ENCODE measurements at regions of chr4 and their contacts with region 1.

Region 1: DNA sequence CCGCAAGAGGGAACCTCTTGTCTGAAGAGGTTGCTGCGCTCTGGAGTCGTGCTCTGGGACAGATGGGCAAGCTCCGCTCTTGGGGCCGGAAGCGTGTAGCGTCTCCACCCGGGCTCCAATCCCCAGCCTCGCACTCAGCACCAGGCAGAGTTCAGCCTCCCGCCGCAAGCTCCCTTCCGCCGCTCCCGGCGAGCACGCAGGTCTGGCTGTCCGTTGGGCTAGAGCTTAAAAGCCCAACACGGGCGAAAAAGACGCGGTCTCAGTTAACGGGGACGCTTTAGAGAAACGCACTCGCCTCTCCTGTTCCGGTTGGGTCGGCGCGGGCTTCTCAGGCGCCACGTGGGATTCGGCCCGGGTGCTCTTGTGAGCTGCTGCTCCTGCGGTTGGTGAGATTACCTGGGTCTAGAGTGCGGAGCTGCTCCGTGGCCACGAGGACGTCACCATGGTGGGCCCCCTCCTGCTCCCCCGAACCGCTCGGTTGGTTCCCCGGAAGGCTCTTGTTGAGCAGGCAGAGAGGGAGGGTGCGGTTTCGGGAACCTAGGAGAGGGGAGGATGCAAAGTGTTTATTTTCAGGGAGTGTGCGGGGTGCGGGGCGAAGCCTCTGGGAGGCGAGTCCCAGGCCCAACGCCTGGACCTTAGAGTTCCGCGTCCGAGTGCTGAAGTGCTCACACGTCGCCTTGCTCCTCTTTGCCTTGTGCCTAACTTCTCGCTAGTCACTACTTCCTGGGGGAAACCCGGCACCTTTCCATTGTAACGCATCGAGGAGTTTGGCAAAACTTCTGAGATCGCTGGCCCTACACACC is at the start of gene TMA16:
- DNase-seq: peak; percentile 81 to 92 (median 89)
- ATAC-seq: peak; percentile 96 to 98 (median 98)
- H3K4me3 ChIP-seq: peak within 1 kb of the TSS; percentile 69 to 98 (median 84)
- H3K27ac ChIP-seq: peak within 1 kb of the TSS; percentile 51 to 92 (median 82)
- H3K4me1 ChIP-seq: peaks cover 0 to 22% (median 10%) of the 10 kb centered on the region in 12 donors
- H3K27me3 ChIP-seq: no peaks in the 10 kb centered on the region
- CTCF ChIP-seq: peak in 2 of 12 donors; percentile 9 to 11
- POLR2A ChIP-seq: peak in 1 of 2 donors; percentile 33
- total RNA-seq, gene TMA16: 8.3 to 16.9 (median 11.5) TPM

Region 2: GRCh38 chr4:163166041-163166579 is 328.5 kb before region 1 on chr4:
- intact Hi-C with region 1: loop called in 3 of 10 experiments (anchors 5 to 10 kb)
- DNase-seq: peak; percentile 28 to 73 (median 45)
- ATAC-seq: peak in 3 of 4 donors; percentile 67 to 80 (median 75)
- H3K4me3 ChIP-seq: peak overlapping the region; percentile 71 to 94 (median 89)
- H3K27ac ChIP-seq: peak overlapping the region; percentile 59 to 94 (median 86)
- H3K4me1 ChIP-seq: peaks cover 0 to 33% (median 19%) of the 10 kb centered on the region in 12 donors
- H3K27me3 ChIP-seq: no peaks in the 10 kb centered on the region
- CTCF ChIP-seq: no peak
- POLR2A ChIP-seq: no peak

Region 3: DNA sequence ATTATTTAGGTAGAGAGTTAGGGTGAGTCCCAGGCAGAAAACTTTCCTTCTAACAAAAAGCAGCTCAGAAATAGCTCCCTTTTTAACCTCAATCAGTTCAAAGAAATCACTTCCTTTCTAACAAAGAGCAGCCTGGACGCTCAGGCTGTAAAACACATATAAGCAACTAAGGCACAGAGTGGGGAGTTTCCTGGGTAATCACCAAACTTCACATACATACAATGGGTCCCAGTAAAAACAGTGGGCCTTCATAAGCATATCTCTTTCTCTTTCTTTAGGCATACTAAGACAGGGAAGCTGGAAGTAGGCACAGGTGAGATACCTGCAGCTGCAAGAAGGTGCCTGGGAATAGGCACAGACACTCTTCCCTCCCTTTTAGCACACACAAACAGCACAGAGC is 323.0 kb before region 1 on chr4:
- intact Hi-C with region 1: loop called in 3 of 10 experiments (anchors 5 to 10 kb)
- DNase-seq: no peak
- ATAC-seq: no peak
- H3K4me3 ChIP-seq: no peak overlapping the region
- H3K27ac ChIP-seq: no peak overlapping the region
- H3K4me1 ChIP-seq: peaks cover 0 to 5% (median 0%) of the 10 kb centered on the region in 12 donors
- H3K27me3 ChIP-seq: peaks cover 0 to 24% (median 0%) of the 10 kb centered on the region in 9 donors
- CTCF ChIP-seq: no peak
- POLR2A ChIP-seq: no peak

Region 4: GRCh38 chr4:163372029-163372428 is 122.5 kb before region 1 on chr4:
- intact Hi-C with region 1: no loop called
- DNase-seq: no peak
- ATAC-seq: no peak
- H3K4me3 ChIP-seq: no peak overlapping the region
- H3K27ac ChIP-seq: no peak overlapping the region
- H3K4me1 ChIP-seq: no peaks in the 10 kb centered on the region
- H3K27me3 ChIP-seq: no peaks in the 10 kb centered on the region
- CTCF ChIP-seq: no peak
- POLR2A ChIP-seq: no peak

Region 5: GRCh38 chr4:163622379-163623035 is 127.9 kb after region 1 on chr4:
- intact Hi-C with region 1: no loop called
- DNase-seq: no peak
- ATAC-seq: peak in 3 of 4 donors; percentile 20 to 37 (median 36)
- H3K4me3 ChIP-seq: no peak overlapping the region
- H3K27ac ChIP-seq: peak overlapping the region in 1 of 12 donors; percentile 87
- H3K4me1 ChIP-seq: peaks cover 0 to 18% (median 0%) of the 10 kb centered on the region in 12 donors
- H3K27me3 ChIP-seq: no peaks in the 10 kb centered on the region
- CTCF ChIP-seq: no peak
- POLR2A ChIP-seq: no peak

Region 6: GRCh38 chr4:163681208-163681821 is 186.8 kb after region 1 on chr4:
- intact Hi-C with region 1: no loop called
- DNase-seq: no peak
- ATAC-seq: no peak
- H3K4me3 ChIP-seq: no peak overlapping the region
- H3K27ac ChIP-seq: no peak overlapping the region
- H3K4me1 ChIP-seq: no peaks in the 10 kb centered on the region
- H3K27me3 ChIP-seq: no peaks in the 10 kb centered on the region
- CTCF ChIP-seq: peak; percentile 23 to 66 (median 48)
- POLR2A ChIP-seq: no peak